ENCODE measurements at regions of chr22 and their contacts with region 1.

Region 1: GRCh38 chr22:43884600-43885325 is 7.0 kb downstream of the PNPLA5 start:
- H3K4me3 ChIP-seq: no peak overlapping the region
- H3K27ac ChIP-seq: no peak overlapping the region
- H3K4me1 ChIP-seq: no peaks in the 10 kb centered on the region
- CTCF ChIP-seq: peak; percentile 66

Region 2: GRCh38 chr22:43861529-43861928 is 23.2 kb before region 1 on chr22:
- CTCF ChIA-PET with region 1: interaction called, 23 read pairs
- POLR2A ChIA-PET with region 1: no interaction called
- H3K4me3 ChIP-seq: peak overlapping the region; percentile 52
- H3K27ac ChIP-seq: no peak overlapping the region
- H3K4me1 ChIP-seq: no peaks in the 10 kb centered on the region
- CTCF ChIP-seq: no peak

Region 3: DNA sequence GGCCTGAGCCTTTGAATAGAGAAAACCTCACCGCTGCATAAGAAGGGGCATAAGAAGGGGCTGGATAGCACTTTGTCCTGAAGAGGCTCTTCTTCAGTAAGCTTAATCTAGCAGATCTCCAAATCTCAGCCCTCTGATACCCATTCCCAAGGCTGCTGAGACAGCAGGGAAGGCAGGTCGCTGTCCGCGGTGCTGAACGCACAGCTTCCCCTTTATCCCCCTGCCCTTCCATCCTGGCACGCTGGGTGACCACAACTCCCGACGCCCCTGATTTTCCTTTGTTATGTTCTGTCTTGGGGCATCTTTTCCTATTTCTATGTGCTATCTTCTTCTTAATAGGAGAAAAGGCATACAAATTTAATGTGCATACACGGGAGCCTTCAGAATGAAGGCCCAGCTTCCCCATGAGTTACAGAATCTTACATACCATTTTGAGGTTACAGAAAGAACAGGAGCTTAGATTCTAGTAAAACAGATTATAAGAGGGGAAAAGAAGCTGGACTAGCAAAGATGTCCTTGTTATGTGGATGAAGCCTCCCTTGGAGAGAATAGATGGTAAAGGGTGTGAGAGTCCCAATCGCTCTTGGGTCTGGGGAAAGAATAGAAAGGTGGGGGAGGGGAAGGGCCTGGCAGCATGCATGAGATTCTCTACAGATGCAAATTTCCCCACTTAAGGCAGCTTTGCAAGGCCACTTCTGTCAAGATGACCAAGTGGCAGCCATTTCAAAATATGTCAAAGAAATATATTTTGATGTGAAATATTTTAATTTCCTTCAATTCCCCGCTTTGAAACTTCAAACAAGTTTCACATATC is 16.7 kb before region 1 on chr22:
- CTCF ChIA-PET with region 1: interaction called, 23 read pairs
- POLR2A ChIA-PET with region 1: no interaction called
- H3K4me3 ChIP-seq: no peak overlapping the region
- H3K27ac ChIP-seq: no peak overlapping the region
- H3K4me1 ChIP-seq: no peaks in the 10 kb centered on the region
- CTCF ChIP-seq: no peak

Region 4: DNA sequence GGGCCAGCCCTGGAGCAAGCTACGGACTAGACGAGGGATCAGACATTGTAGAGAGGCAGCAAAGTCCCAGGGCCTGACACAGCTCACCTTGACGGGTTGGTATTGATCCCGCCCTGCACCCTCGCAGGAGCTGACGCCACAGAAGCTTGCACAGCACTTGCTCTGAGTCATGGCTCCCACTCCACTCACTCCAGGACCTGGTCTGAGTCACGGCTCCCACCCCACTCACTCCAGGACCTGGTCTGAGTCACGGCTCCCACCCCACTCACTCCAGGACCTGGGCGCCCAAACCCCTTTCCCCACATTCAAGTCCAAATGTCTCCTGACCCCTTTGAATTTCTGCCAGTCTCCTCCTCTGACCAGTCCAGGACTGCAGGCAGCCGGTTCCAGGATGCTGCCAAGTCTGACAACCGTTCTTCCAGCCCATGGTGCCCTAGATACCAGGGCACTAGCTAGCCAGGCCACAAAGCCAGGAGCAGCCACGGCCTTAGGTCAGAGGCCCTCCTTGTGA is 13.0 kb after region 1 on chr22:
- CTCF ChIA-PET with region 1: interaction called, 87 read pairs
- POLR2A ChIA-PET with region 1: interaction called, 5 read pairs
- H3K4me3 ChIP-seq: no peak overlapping the region
- H3K27ac ChIP-seq: no peak overlapping the region
- H3K4me1 ChIP-seq: no peaks in the 10 kb centered on the region
- CTCF ChIP-seq: no peak

Region 5: GRCh38 chr22:43915871-43916270 is 31.1 kb after region 1 on chr22:
- CTCF ChIA-PET with region 1: interaction called, 12 read pairs
- POLR2A ChIA-PET with region 1: no interaction called
- H3K4me3 ChIP-seq: no peak overlapping the region
- H3K27ac ChIP-seq: no peak overlapping the region
- H3K4me1 ChIP-seq: no peaks in the 10 kb centered on the region
- CTCF ChIP-seq: no peak

Region 6: GRCh38 chr22:43945632-43946383 is 61.0 kb after region 1 on chr22:
- CTCF ChIA-PET with region 1: interaction called, 109 read pairs
- POLR2A ChIA-PET with region 1: interaction called, 5 read pairs
- H3K4me3 ChIP-seq: no peak overlapping the region
- H3K27ac ChIP-seq: no peak overlapping the region
- H3K4me1 ChIP-seq: no peaks in the 10 kb centered on the region
- CTCF ChIP-seq: peak; percentile 89